WTC11 (cell line): ENCODE measurements at regions of chr2 and their contacts with region 1.

Region 1: GRCh38 chr2:215793747-215794595 is 219.4 kb downstream of the MREG start:
- DNase-seq: no peak
- ATAC-seq: no peak
- H3K4me3 Mint-ChIP-seq: no peak overlapping the region
- H3K27ac Mint-ChIP-seq: no peak overlapping the region
- H3K4me1 Mint-ChIP-seq: peaks cover 60% of the 10 kb centered on the region
- H3K27me3 Mint-ChIP-seq: no peaks in the 10 kb centered on the region
- CTCF ChIP-seq: no peak

Region 2: DNA sequence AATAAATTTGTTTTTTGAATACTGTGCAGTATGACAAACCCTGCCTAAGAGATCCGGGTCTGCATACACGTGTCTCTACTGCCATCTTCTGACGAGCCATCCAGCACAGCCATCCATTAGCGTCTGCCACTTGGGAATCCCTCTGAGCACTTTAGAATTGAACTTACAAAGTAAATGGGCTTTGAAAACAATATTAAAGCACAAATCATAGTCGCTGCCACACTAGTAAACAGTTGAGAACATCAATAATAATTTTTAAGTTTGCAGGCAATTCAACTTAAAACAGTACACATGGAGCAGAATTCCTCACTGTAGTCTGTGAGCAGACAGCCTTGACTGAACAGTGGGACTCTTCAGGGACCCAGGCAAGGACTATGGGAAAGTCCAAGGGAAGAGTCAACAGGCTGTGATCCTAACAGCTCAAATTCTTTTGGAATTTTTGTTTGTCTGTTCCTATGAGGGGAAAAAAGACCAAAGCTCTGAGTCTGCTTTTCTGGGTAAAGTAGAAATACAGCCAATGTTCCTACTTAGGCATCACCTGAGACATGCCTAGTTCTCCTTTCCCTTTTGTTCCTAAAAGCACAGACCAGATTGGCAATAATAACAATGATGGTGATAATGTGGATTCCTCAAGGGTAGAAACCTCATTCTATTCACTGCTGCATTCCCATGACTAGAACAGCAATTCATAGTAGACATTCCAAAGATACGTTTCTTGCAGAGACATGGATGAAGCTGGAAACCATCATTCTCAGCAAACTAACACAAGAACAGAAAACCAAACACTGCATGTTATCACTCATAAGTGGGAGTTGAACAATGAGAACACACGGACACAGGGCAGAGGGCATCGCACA is 126.5 kb after region 1 on chr2:
- CTCF ChIA-PET with region 1: interaction called, 22 read pairs
- POLR2A ChIA-PET with region 1: no interaction called
- DNase-seq: peak; percentile 64
- ATAC-seq: peak; percentile 86
- H3K4me3 Mint-ChIP-seq: no peak overlapping the region
- H3K27ac Mint-ChIP-seq: peak overlapping the region; percentile 94
- H3K4me1 Mint-ChIP-seq: peaks cover 90% of the 10 kb centered on the region
- H3K27me3 Mint-ChIP-seq: no peaks in the 10 kb centered on the region
- CTCF ChIP-seq: peak; percentile 55

Region 3: GRCh38 chr2:215931256-215931903 is 137.4 kb after region 1 on chr2:
- CTCF ChIA-PET with region 1: interaction called, 31 read pairs
- POLR2A ChIA-PET with region 1: interaction called, 3 read pairs
- DNase-seq: peak; percentile 67
- ATAC-seq: peak; percentile 65
- H3K4me3 Mint-ChIP-seq: no peak overlapping the region
- H3K27ac Mint-ChIP-seq: no peak overlapping the region
- H3K4me1 Mint-ChIP-seq: peaks cover 41% of the 10 kb centered on the region
- H3K27me3 Mint-ChIP-seq: no peaks in the 10 kb centered on the region; the same call in 1 of the 2 replicates
- CTCF ChIP-seq: peak; percentile 70